HepG2 (cell line): ENCODE measurements at regions of chr2 and their contacts with region 1.

Region 1: DNA sequence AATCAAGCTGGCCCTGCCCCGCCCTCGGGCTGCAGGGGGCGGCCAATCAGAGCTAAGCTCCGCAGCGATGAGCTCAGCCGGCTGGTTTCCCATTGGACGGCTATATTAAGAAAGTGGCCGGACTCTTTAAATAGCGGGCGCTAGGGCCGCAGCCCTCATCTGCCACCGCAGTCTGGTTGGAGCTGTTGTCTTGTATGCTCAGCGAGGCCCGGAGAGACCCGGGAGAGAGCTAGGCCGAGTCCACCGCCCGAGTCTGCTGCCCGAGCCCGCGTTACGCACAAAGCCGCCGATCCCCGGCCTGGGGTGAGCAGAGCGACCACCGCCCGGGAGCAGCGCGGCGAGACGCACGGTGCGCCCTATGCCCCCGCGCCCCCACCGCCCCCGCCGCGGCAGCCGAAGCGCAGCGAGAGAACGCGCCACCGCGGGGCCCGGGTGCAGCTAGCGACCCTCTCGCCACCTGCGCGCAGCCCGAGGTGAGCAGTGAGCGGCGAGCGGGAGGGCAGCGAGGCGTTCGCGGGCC is at the start of gene RHOB:
- DNase-seq: peak; percentile 98
- ATAC-seq: peak; percentile 82
- H3K4me3 ChIP-seq: peak within 1 kb of the TSS; percentile 78 to 97 (median 89)
- H3K27ac ChIP-seq: peak within 1 kb of the TSS; percentile 92
- H3K4me1 ChIP-seq: peaks cover 60% of the 10 kb centered on the region
- H3K27me3 ChIP-seq: no peaks in the 10 kb centered on the region; a peak in 1 of 5 replicates
- CTCF ChIP-seq: no peak
- EP300 ChIP-seq: peak; percentile 35 to 54; a peak in 1 of 4 replicates
- POLR2A ChIP-seq: peak; percentile 100
- RAD21 ChIP-seq: peak; percentile 65
- total RNA-seq, gene RHOB: 192 and 268 TPM in 2 replicates

Region 2: GRCh38 chr2:20097879-20098714 is 348.9 kb before region 1 on chr2:
- CTCF ChIA-PET with region 1: no interaction called
- POLR2A ChIA-PET with region 1: no interaction called
- in situ Hi-C with region 1: no loop called
- intact Hi-C with region 1: no loop called
- DNase-seq: peak; percentile 82
- ATAC-seq: peak; percentile 63
- H3K4me3 ChIP-seq: peak overlapping the region in 1 of 3 experiments; percentile 38; a peak in 2 of 6 replicates
- H3K27ac ChIP-seq: no peak overlapping the region
- H3K4me1 ChIP-seq: peaks cover 58% of the 10 kb centered on the region
- H3K27me3 ChIP-seq: no peaks in the 10 kb centered on the region
- CTCF ChIP-seq: peak; percentile 98
- EP300 ChIP-seq: no peak
- POLR2A ChIP-seq: no peak
- RAD21 ChIP-seq: peak; percentile 98

Region 3: DNA sequence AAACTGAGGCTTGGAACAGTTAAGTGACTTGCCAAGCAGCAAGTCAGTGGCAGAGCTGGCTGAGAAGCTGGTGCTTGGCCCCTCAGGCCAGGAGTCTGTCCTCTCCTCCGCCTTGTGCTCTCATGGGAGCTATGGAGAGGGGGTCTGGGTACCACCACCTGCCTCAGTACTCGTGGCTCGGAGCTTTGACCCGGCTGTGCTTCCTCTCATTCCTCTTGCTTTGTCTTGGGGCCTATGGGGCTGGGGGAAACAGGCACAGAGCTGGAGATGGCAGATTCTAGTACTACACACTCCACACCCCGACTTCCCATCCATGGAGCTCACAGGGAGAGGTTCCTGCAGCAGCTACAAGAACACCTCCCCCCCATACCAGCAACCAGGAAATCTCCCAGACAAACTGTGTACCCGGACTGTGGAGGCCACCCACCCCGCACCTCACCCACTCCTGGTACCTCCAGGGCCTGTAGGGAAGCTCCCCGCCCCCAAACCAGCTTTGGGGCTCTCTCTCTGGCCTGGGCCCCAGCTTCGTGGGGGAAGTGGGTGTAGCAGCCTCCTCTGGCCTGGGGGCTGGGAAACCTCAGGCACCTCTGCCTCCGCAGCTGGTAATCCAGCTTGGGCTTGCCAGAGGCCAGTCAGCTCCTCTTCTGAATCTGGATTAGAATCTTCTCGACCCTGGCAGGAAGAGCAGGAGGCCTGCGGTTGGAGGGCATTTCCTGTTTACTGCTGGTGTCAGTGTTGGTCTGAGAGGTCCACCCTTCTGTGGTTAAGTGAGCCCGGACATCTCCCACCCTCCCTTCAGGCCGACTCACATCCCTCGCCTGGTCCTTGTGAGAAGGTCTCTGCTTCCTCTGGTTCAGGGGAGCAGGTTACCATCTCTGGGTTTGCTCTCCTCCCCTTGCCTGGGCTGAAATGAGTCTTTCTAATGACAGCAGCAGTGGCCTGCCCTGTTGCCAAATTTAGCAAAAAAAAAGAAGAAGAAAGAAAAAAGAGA is 22.4 kb before region 1 on chr2:
- CTCF ChIA-PET with region 1: no interaction called
- POLR2A ChIA-PET with region 1: interaction called, 190 read pairs
- in situ Hi-C with region 1: no loop called
- intact Hi-C with region 1: no loop called
- DNase-seq: no peak
- ATAC-seq: no peak
- H3K4me3 ChIP-seq: peak overlapping the region; percentile 2 to 52 (median 6); a peak in 3 of 6 replicates
- H3K27ac ChIP-seq: no peak overlapping the region
- H3K4me1 ChIP-seq: peaks cover 65% of the 10 kb centered on the region
- H3K27me3 ChIP-seq: peaks cover 1 to 56% of the 10 kb centered on the region in 2 experiments
- CTCF ChIP-seq: no peak
- EP300 ChIP-seq: peak in 1 of 2 experiments; percentile 45; a peak in 2 of 4 replicates
- POLR2A ChIP-seq: no peak
- RAD21 ChIP-seq: no peak

Region 4: DNA sequence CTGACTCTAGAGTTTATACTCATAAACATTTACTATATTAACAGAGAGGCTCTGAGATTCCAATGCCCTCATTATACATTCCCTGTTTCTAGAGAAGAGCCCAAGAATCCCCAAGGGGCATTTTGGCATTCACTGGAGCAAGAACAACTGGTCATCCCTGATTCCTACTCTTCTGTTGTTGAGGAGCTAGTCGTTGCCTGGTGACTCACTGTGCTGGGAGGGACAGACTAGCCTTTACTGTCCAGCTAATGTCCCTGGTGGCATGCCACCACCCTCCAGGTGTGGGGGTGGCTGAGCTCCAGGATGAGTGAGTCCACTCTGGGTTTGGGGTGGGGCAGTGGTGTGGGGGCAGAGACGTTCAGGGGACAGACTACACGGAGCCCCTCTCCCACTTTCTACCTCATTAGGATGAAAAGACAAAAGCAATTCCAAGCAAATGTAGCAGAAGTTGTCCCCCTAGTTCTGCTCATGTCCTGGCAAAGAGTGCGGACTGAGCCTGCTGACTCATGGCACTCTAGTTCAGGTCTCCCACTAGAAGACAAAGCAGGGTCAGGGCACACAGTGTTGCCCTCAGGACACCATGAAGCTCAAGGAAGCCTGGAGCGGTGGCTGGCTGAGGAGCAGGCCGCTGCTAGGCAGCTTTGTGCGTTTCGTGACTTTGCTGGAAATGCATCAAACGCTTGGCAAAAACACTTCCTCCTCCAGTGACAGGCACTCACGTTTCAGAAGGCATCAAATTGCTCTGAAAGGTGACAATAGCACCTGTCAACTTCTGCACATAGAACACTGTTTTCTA is 49.3 kb after region 1 on chr2:
- CTCF ChIA-PET with region 1: no interaction called
- POLR2A ChIA-PET with region 1: interaction called, 97 read pairs
- in situ Hi-C with region 1: no loop called
- intact Hi-C with region 1: no loop called
- DNase-seq: peak; percentile 51
- ATAC-seq: peak; percentile 62
- H3K4me3 ChIP-seq: peak overlapping the region in 1 of 3 experiments; percentile 9; a peak in 1 of 6 replicates
- H3K27ac ChIP-seq: no peak overlapping the region
- H3K4me1 ChIP-seq: peaks cover 57% of the 10 kb centered on the region
- H3K27me3 ChIP-seq: no peaks in the 10 kb centered on the region
- CTCF ChIP-seq: no peak
- EP300 ChIP-seq: no peak
- POLR2A ChIP-seq: no peak
- RAD21 ChIP-seq: no peak

Region 5: DNA sequence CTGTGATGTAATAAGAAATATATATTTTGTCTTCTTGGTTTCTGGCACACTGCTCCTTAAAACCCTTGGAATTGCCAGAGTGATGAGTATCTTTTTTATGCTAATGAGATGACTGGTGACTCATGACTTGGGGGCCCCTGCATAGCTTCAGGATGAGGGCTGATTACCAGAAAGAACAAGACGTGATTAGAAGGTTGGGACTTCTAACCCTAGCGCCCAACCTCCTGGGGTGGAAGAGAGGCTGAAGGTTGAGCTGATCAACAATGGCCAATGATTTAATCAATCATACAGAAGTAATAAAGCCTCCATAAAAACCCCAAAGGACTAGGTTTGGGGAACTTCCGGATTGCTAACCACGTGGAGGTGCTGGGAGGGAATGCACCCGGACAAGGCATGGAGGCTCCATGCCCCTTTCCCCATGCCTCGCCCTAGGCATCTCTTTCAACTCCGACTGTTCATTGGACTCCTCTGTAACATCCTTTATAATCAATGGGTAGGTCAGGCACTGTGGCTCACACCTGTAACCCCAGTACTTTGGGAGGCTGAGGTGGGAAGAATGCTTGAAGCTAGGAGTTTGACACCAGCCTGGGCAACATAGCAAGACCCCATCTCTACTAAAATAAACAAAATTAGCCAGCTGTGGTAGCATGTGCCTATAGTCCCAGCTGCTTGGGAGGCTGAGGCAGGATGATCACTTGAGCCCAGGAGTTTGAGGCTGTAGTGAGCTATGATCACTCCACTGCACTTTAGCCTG is 114.9 kb after region 1 on chr2:
- CTCF ChIA-PET with region 1: no interaction called
- POLR2A ChIA-PET with region 1: interaction called, 10 read pairs
- in situ Hi-C with region 1: no loop called
- intact Hi-C with region 1: no loop called
- DNase-seq: no peak
- ATAC-seq: no peak
- H3K4me3 ChIP-seq: no peak overlapping the region
- H3K27ac ChIP-seq: no peak overlapping the region
- H3K4me1 ChIP-seq: peaks cover 55% of the 10 kb centered on the region
- H3K27me3 ChIP-seq: no peaks in the 10 kb centered on the region
- CTCF ChIP-seq: no peak
- EP300 ChIP-seq: no peak
- POLR2A ChIP-seq: no peak
- RAD21 ChIP-seq: no peak

Region 6: GRCh38 chr2:20617892-20618467 is 171.0 kb after region 1 on chr2:
- CTCF ChIA-PET with region 1: no interaction called
- POLR2A ChIA-PET with region 1: interaction called, 153 read pairs
- in situ Hi-C with region 1: no loop called
- intact Hi-C with region 1: no loop called
- DNase-seq: peak; percentile 94
- ATAC-seq: peak; percentile 92
- H3K4me3 ChIP-seq: no peak overlapping the region
- H3K27ac ChIP-seq: peak overlapping the region; percentile 95
- H3K4me1 ChIP-seq: peaks cover 63% of the 10 kb centered on the region
- H3K27me3 ChIP-seq: no peaks in the 10 kb centered on the region
- CTCF ChIP-seq: peak; percentile 60
- EP300 ChIP-seq: peak; percentile 49 to 56; a peak in 2 of 4 replicates
- POLR2A ChIP-seq: peak in 1 of 2 experiments; percentile 53; a peak in 1 of 4 replicates
- RAD21 ChIP-seq: peak; percentile 92

Region 7: DNA sequence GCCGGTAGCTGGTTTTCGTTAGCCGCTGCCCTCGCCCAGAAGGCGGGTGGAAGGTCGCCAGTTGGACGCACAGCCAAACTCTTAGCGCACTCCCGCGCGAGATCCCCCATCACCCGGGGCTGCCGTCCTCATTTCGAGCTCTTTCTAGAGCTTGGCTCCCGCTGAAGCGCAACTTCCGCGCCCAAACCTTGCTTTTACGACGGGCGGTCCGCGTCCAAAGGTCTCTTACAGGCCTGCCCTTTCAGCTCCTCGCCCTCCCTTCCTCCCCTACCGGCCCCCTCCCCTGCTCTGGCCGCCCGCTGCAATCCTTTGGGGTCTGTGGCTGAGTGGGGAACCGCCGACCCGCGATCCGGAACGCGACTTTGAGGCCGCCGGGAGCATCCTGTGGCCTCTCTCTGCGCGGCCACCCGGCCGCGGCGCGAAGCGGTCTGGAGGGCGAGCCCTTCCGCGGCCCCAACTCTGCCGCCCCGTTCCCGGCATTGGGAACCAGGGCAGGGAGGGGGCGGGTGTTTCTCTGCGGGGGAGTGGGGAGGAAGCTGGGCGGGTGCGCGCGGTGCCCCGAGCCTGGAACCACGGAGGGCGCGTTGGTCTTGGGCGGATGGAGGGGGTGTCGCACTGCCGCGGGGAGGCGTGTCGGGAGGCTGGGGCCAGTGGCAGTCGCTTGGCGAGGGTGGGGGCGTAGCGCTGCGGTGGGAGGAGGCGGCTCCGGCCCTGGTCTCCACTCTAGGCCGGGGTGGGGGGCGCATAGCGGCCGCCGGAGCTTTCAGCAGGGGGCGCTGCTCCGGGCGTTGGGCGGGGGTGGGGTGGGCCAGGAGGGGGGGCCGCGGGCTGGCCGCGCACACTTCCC is 219.6 kb after region 1 on chr2 and contains the start of gene GDF7:
- CTCF ChIA-PET with region 1: no interaction called
- POLR2A ChIA-PET with region 1: interaction called, 14 read pairs
- in situ Hi-C with region 1: no loop called
- intact Hi-C with region 1: no loop called
- DNase-seq: peak; percentile 46
- ATAC-seq: peak; percentile 60
- H3K4me3 ChIP-seq: peak within 1 kb of the TSS; percentile 81 to 87 (median 87)
- H3K27ac ChIP-seq: peak within 1 kb of the TSS; percentile 65
- H3K4me1 ChIP-seq: peaks cover 49% of the 10 kb centered on the region
- H3K27me3 ChIP-seq: peaks cover 20 to 43% of the 10 kb centered on the region in 2 experiments; a peak in 4 of 5 replicates
- CTCF ChIP-seq: peak; percentile 71
- EP300 ChIP-seq: no peak
- POLR2A ChIP-seq: no peak
- RAD21 ChIP-seq: no peak
- total RNA-seq, gene GDF7: 10.2 and 15.0 TPM in 2 replicates

Region 8: GRCh38 chr2:21559351-21559750 is 1112.4 kb after region 1 on chr2:
- CTCF ChIA-PET with region 1: no interaction called
- POLR2A ChIA-PET with region 1: no interaction called
- in situ Hi-C with region 1: no loop called
- intact Hi-C with region 1: no loop called
- DNase-seq: no peak
- ATAC-seq: no peak
- H3K4me3 ChIP-seq: no peak overlapping the region
- H3K27ac ChIP-seq: no peak overlapping the region
- H3K4me1 ChIP-seq: no peaks in the 10 kb centered on the region
- H3K27me3 ChIP-seq: no peaks in the 10 kb centered on the region
- CTCF ChIP-seq: no peak
- EP300 ChIP-seq: no peak
- POLR2A ChIP-seq: no peak
- RAD21 ChIP-seq: no peak